Naive thymus-derived CD4-positive, alpha-beta T cell (primary cell): ENCODE measurements at regions of chr9 and their contacts with region 1.

Region 1: GRCh38 chr9:95726756-95727155 is 148.7 kb upstream of the ERCC6L2 start:
- DNase-seq: peak in 1 of 9 donors; percentile 31
- ATAC-seq: no peak
- H3K4me3 ChIP-seq: no peak overlapping the region
- H3K4me3 Mint-ChIP-seq: peak overlapping the region in 1 of 10 donors; percentile 20
- H3K27ac ChIP-seq: no peak overlapping the region
- H3K27ac Mint-ChIP-seq: no peak overlapping the region
- H3K4me1 ChIP-seq: peaks cover 18 to 24% of the 10 kb centered on the region in 2 donors
- H3K4me1 Mint-ChIP-seq: peaks cover 33 to 58% (median 49%) of the 10 kb centered on the region in 7 donors
- H3K27me3 ChIP-seq: no peaks in the 10 kb centered on the region
- H3K27me3 Mint-ChIP-seq: peaks cover 0 to 31% (median 0%) of the 10 kb centered on the region in 5 donors

Region 2: GRCh38 chr9:95462249-95463147 is 264.3 kb before region 1 on chr9:
- CTCF ChIA-PET with region 1: no interaction called
- POLR2A ChIA-PET with region 1: no interaction called
- intact Hi-C with region 1: loop called (anchors 1 kb)
- DNase-seq: peak; percentile 47 to 91 (median 86)
- ATAC-seq: peak; percentile 98
- H3K4me3 ChIP-seq: peak overlapping the region; percentile 45
- H3K4me3 Mint-ChIP-seq: peak overlapping the region; percentile 80 to 91 (median 85)
- H3K27ac ChIP-seq: no peak overlapping the region
- H3K27ac Mint-ChIP-seq: peak overlapping the region; percentile 25 to 92 (median 76)
- H3K4me1 ChIP-seq: peaks cover 24 to 26% of the 10 kb centered on the region in 2 donors
- H3K4me1 Mint-ChIP-seq: peaks cover 22 to 53% (median 44%) of the 10 kb centered on the region in 7 donors
- H3K27me3 ChIP-seq: no peaks in the 10 kb centered on the region
- H3K27me3 Mint-ChIP-seq: peaks cover 0 to 59% (median 0%) of the 10 kb centered on the region in 5 donors

Region 3: DNA sequence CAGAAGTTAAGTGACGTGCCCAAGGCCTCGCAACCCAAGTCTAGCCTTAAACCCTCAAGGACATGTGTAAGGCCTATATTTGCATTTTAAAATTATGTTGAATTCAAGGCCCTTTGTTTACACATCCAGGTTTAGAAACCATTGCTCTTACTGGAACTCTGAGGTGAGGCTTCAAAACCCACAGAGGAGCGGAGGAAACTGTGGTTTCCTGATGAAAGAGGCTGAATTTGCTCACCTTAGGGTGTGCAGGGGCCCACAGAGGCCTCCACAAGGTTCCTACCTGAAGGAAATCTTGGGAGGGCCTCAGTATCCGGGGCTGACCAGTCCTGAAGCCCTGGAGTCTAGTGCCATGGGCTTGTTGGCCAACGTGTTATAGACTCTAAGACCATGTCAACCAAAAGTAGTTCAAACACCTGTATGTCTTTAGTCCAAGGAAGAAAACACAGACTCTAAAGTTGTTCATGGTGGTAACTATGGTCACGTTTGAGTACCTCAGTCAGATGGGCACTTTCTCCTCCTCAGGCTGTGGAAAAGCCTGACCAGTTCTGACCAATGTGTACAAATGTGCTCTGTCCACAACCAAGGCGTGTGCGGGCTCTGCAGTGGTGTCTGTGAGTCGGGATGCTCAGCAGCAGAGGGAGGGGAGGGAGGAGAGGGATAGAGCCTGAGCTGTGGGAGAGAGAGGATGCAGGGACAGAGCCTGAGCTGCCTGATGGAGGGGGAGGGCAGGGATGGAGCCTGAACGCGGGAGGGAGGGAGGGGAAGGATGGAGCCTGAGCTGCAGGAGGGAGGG is 24.2 kb after region 1 on chr9:
- CTCF ChIA-PET with region 1: no interaction called
- POLR2A ChIA-PET with region 1: no interaction called
- intact Hi-C with region 1: loop called (anchors 1 kb)
- DNase-seq: peak in 7 of 9 donors; percentile 30 to 69 (median 48)
- ATAC-seq: peak; percentile 55
- H3K4me3 ChIP-seq: peak overlapping the region; percentile 17
- H3K4me3 Mint-ChIP-seq: peak overlapping the region; percentile 44 to 78 (median 66)
- H3K27ac ChIP-seq: no peak overlapping the region
- H3K27ac Mint-ChIP-seq: peak overlapping the region in 3 of 9 donors; percentile 38 to 59 (median 46)
- H3K4me1 ChIP-seq: peaks cover 13 to 15% of the 10 kb centered on the region in 2 donors
- H3K4me1 Mint-ChIP-seq: peaks cover 2 to 24% (median 22%) of the 10 kb centered on the region in 7 donors
- H3K27me3 ChIP-seq: no peaks in the 10 kb centered on the region
- H3K27me3 Mint-ChIP-seq: peaks cover 0 to 41% (median 5%) of the 10 kb centered on the region in 5 donors

Region 4: GRCh38 chr9:95770653-95771131 is 43.9 kb after region 1 on chr9:
- CTCF ChIA-PET with region 1: no interaction called
- POLR2A ChIA-PET with region 1: no interaction called
- intact Hi-C with region 1: no loop called
- DNase-seq: no peak
- ATAC-seq: no peak
- H3K4me3 ChIP-seq: no peak overlapping the region
- H3K4me3 Mint-ChIP-seq: no peak overlapping the region
- H3K27ac ChIP-seq: no peak overlapping the region
- H3K27ac Mint-ChIP-seq: no peak overlapping the region
- H3K4me1 ChIP-seq: peaks cover 0 to 4% of the 10 kb centered on the region in 2 donors
- H3K4me1 Mint-ChIP-seq: peaks cover 0 to 27% (median 8%) of the 10 kb centered on the region in 7 donors
- H3K27me3 ChIP-seq: no peaks in the 10 kb centered on the region
- H3K27me3 Mint-ChIP-seq: peaks cover 8 to 41% (median 27%) of the 10 kb centered on the region in 5 donors

Region 5: DNA sequence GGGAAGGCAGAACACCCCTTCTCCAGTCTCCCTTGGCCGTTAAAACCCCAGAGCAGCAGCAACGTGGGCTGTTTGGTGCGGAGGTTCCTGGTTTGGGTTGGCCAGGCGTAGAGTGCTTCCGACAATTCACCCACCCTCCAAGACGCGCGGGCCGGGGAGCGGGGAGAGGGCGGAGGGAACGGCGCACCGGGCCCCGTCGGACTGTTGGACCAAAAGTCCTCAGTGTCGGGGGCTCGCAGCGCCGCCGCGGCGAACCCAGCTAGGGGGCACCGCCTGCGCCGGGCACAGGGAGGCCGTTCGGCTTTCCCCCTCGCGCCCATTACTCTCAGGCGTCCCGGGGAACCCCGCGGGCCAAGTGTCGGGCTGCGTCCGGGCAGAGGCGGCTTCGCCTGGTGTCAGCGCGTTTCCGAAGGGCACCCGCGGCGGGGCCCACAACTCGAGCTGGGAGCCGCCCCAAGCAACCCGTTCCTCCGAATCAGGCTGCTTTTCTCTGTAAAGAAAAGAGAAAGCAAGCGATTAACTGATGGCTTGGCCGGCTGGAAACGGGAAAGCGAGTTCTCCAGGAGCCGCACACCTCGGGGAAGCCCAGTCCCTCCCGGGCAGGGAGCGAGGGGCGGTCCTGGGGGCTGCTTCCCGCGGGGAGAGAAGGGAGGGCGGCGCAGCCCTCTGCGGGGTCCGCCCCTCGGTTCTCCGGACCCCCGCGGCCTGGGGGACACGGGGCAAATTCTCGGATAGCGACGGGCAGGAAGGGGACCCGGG is 294.2 kb after region 1 on chr9:
- CTCF ChIA-PET with region 1: interaction called, 4 read pairs
- POLR2A ChIA-PET with region 1: no interaction called
- intact Hi-C with region 1: loop called (anchors 1 to 2 kb)
- DNase-seq: peak in 8 of 9 donors; percentile 35 to 70 (median 44)
- ATAC-seq: peak; percentile 70
- H3K4me3 ChIP-seq: peak overlapping the region; percentile 61
- H3K4me3 Mint-ChIP-seq: peak overlapping the region; percentile 71 to 91 (median 86)
- H3K27ac ChIP-seq: peak overlapping the region; percentile 72
- H3K27ac Mint-ChIP-seq: peak overlapping the region; percentile 28 to 97 (median 70)
- H3K4me1 ChIP-seq: peaks cover 27 to 34% of the 10 kb centered on the region in 2 donors
- H3K4me1 Mint-ChIP-seq: peaks cover 47 to 74% (median 63%) of the 10 kb centered on the region in 7 donors
- H3K27me3 ChIP-seq: no peaks in the 10 kb centered on the region
- H3K27me3 Mint-ChIP-seq: peaks cover 0 to 31% (median 5%) of the 10 kb centered on the region in 5 donors